Posterior vena cava (tissue), 2 donors: ENCODE measurements at regions of chr3 and their contacts with region 1.

Region 1: DNA sequence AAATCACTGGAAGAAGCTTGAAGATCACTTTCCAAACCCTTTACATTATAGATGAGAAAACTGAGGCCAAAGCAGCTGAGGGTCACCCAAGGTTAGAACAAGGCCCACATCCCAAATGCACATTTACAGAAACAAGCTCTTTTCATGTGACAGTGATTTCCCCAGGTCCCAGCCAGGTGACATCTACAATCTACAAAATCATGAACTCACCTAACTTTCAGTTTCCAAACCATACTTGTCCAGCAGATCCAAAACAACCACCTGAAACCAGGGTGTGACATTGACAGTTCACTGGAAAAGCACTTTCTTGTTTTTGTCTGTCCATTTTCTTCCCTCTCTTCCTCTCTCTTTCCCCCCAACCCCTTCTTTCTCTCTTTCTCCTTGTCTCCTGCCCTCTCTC is 132.2 kb upstream of the PRICKLE2 start:
- DNase-seq: no peak

Region 2: GRCh38 chr3:64388886-64389285 is 31.4 kb after region 1 on chr3:
- intact Hi-C with region 1: loop called in 1 of 2 experiments (anchors 2 kb)
- DNase-seq: no peak